ENCODE measurements at regions of chr1 and their contacts with region 1.

Region 1: GRCh38 chr1:159936273-159936904 is 9.0 kb downstream of the IGSF9 start:
- DNase-seq: peak; percentile 58 to 77
- ATAC-seq: peak; percentile 63 to 84 (median 72)
- H3K4me3 ChIP-seq: no peak overlapping the region
- H3K27ac ChIP-seq: no peak overlapping the region
- H3K4me1 ChIP-seq: peaks cover 0 to 17% (median 14%) of the 10 kb centered on the region in 9 donors
- H3K27me3 ChIP-seq: peaks cover 0 to 6% (median 0%) of the 10 kb centered on the region in 7 donors
- CTCF ChIP-seq: peak; percentile 94 to 99 (median 97)

Region 2: DNA sequence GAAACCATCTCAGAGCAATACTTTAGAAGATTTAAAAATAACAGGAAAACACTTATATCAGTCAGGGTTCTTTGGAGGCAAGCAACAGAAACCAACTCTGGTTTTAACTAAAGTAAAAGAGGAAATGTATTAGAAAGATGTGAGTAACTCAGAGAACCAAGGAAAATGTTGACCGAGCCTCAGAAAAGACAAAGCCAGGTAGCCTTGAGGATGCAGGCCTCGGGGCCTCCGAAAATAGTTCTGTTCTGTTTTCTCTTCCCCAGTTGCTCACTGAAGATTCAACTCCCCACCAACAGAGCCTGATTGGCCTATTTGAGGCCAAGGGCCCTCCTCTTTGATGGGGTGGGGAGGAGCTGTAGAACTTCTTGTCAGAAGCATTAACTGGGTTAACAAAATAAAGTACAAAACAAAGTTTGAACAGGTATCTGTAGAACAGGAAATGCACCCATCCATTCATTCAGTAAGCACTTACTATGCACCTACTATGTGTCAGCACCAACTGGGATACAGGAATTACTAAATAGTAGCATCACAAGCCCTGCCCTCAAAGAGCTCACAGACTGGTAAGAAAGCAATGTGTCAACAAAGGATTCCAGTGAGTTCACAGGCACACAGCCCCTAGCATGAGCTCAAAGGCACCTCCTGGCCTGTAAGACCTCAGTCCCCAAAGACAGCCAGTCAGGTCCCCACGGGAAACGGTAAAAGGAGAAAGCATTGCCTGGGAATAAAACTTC is 97.1 kb before region 1 on chr1:
- intact Hi-C with region 1: loop called in 1 of 10 experiments (anchors 5 kb)
- DNase-seq: no peak
- ATAC-seq: no peak
- H3K4me3 ChIP-seq: no peak overlapping the region
- H3K27ac ChIP-seq: no peak overlapping the region
- H3K4me1 ChIP-seq: no peaks in the 10 kb centered on the region
- H3K27me3 ChIP-seq: no peaks in the 10 kb centered on the region
- CTCF ChIP-seq: no peak

Region 3: DNA sequence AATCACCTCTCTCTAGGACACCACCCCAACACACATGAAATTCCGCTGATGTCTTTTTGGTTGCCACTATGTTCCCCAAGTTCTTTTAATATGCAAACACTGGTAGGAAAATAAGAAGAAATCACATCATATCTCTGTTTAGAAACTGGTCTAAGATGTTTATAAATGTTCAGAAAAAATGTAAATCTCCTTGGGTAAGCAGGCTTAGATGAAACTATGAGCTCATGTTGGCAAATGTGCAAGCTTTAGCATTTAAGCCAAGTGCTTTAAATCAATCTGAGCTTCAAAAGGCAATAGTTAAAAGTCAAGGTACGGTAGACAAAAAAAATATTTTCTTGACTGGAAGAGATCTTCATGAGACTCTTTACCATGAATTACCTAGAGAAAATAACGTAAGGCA is 42.9 kb after region 1 on chr1:
- intact Hi-C with region 1: no loop called
- DNase-seq: no peak
- ATAC-seq: no peak
- H3K4me3 ChIP-seq: no peak overlapping the region
- H3K27ac ChIP-seq: no peak overlapping the region
- H3K4me1 ChIP-seq: no peaks in the 10 kb centered on the region
- H3K27me3 ChIP-seq: peaks cover 0 to 36% (median 0%) of the 10 kb centered on the region in 7 donors
- CTCF ChIP-seq: no peak

Region 4: DNA sequence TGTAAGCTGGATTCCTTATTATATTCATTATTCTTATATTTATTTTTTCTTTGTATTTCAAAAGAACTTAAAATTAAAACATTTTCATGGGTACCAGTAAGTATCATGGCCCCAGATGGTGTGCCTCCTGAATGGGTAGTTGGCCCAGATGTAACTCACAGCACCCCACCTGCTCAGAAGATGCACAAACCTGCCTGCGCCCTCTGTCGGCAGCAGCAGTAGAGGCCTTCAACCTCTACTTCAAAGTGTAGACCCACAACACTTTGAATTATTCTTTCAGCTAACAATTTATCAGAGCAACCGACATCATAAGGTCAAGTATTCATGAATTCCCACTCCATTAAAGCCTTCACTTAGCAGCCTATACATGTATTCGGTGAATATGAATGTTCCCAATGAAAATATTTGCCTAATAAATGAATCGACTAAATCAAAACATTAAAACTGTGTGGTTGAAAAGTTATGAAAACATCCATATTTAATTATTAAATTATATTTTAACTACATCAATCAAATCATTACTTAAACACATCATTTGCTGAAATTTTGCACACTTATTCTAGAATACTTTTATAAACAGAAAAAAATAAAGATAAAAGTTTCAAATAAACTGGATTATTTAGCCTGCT is 70.0 kb after region 1 on chr1:
- intact Hi-C with region 1: loop called (anchors 1 to 5 kb)
- DNase-seq: peak; percentile 35 to 72
- ATAC-seq: peak in 4 of 8 donors; percentile 47 to 78 (median 54)
- H3K4me3 ChIP-seq: no peak overlapping the region
- H3K27ac ChIP-seq: no peak overlapping the region
- H3K4me1 ChIP-seq: no peaks in the 10 kb centered on the region
- H3K27me3 ChIP-seq: no peaks in the 10 kb centered on the region
- CTCF ChIP-seq: peak; percentile 36 to 91 (median 77)

Region 5: GRCh38 chr1:160376525-160377131 is 440.2 kb after region 1 on chr1:
- intact Hi-C with region 1: loop called in 1 of 10 experiments (anchors 10 kb)
- DNase-seq: peak in 1 of 2 donors; percentile 42
- ATAC-seq: peak; percentile 64 to 87 (median 82)
- H3K4me3 ChIP-seq: peak overlapping the region in 1 of 10 donors; percentile 13
- H3K27ac ChIP-seq: peak overlapping the region in 1 of 10 donors; percentile 56
- H3K4me1 ChIP-seq: peaks cover 5 to 28% (median 10%) of the 10 kb centered on the region in 9 donors
- H3K27me3 ChIP-seq: peaks cover 0 to 18% (median 0%) of the 10 kb centered on the region in 7 donors
- CTCF ChIP-seq: peak; percentile 72 to 92 (median 85)